ENCODE measurements at regions of chr3 and their contacts with region 1.

Region 1: GRCh38 chr3:128297401-128298138 is 144.3 kb downstream of the EEFSEC start:
- DNase-seq: no peak
- ATAC-seq: no peak
- H3K4me3 ChIP-seq: no peak overlapping the region
- H3K4me3 Mint-ChIP-seq: peak overlapping the region; percentile 46
- H3K27ac ChIP-seq: no peak overlapping the region
- H3K27ac Mint-ChIP-seq: peak overlapping the region; percentile 50
- H3K4me1 ChIP-seq: peaks cover 43% of the 10 kb centered on the region
- H3K4me1 Mint-ChIP-seq: peaks cover 73% of the 10 kb centered on the region
- H3K27me3 ChIP-seq: no peaks in the 10 kb centered on the region
- H3K27me3 Mint-ChIP-seq: no peaks in the 10 kb centered on the region
- CTCF ChIP-seq: no peak

Region 2: GRCh38 chr3:128254967-128255366 is 42.6 kb before region 1 on chr3:
- CTCF ChIA-PET with region 1: no interaction called
- POLR2A ChIA-PET with region 1: no interaction called
- intact Hi-C with region 1: loop called in 1 of 2 experiments (anchors 1 kb)
- DNase-seq: no peak
- ATAC-seq: no peak
- H3K4me3 ChIP-seq: no peak overlapping the region
- H3K4me3 Mint-ChIP-seq: no peak overlapping the region
- H3K27ac ChIP-seq: no peak overlapping the region
- H3K27ac Mint-ChIP-seq: no peak overlapping the region
- H3K4me1 ChIP-seq: no peaks in the 10 kb centered on the region
- H3K4me1 Mint-ChIP-seq: peaks cover 57% of the 10 kb centered on the region
- H3K27me3 ChIP-seq: no peaks in the 10 kb centered on the region
- H3K27me3 Mint-ChIP-seq: no peaks in the 10 kb centered on the region
- CTCF ChIP-seq: no peak

Region 3: GRCh38 chr3:128316481-128316891 is 18.9 kb after region 1 on chr3:
- CTCF ChIA-PET with region 1: no interaction called
- POLR2A ChIA-PET with region 1: interaction called, 21 read pairs
- intact Hi-C with region 1: loop called in 1 of 2 experiments (anchors 1 kb)
- DNase-seq: peak; percentile 54 to 91 (median 72)
- ATAC-seq: peak; percentile 96
- H3K4me3 ChIP-seq: peak overlapping the region; percentile 0
- H3K4me3 Mint-ChIP-seq: peak overlapping the region; percentile 12
- H3K27ac ChIP-seq: peak overlapping the region; percentile 61 to 78
- H3K27ac Mint-ChIP-seq: peak overlapping the region; percentile 78
- H3K4me1 ChIP-seq: peaks cover 90% of the 10 kb centered on the region
- H3K4me1 Mint-ChIP-seq: peaks cover 89% of the 10 kb centered on the region
- H3K27me3 ChIP-seq: no peaks in the 10 kb centered on the region
- H3K27me3 Mint-ChIP-seq: no peaks in the 10 kb centered on the region
- CTCF ChIP-seq: no peak

Region 4: DNA sequence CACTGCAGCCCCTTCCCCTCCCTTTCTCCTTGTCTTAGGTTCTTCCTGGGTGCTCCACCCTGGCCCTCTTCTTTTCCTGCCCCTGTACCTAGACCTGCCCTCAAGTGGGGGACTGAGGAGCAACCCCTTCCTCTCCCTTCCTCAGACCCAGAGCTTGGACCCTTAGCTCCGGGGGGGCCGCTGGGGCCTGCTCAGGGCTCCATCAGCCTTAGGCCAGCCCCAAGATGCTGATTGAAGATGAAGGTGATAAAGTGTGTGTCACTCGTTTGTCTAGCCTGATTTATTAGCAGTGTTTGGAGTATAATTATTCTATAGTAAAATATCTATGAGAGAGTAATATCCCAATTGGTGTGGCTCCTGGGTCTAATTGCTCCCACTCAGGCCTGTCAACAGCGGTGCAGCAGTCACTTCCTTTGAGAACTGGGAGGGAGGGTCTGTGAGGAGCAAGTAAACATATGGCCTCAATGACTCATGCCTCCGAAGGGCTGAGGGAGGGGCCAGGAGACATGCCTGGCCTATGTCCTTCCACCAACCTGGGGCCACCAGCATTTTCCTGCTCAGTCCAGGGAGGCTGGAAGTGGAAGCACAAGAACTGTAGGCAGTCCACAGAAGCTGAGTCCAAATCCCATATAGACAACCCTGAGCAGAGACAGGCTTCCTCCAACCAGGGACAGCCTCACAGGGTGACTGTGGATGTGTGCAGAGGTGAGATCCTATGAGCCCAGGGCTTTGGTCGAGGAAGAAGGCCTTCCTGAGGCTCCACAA is 45.9 kb after region 1 on chr3:
- CTCF ChIA-PET with region 1: no interaction called
- POLR2A ChIA-PET with region 1: no interaction called
- intact Hi-C with region 1: no loop called
- DNase-seq: no peak
- ATAC-seq: no peak
- H3K4me3 ChIP-seq: no peak overlapping the region
- H3K4me3 Mint-ChIP-seq: no peak overlapping the region
- H3K27ac ChIP-seq: no peak overlapping the region
- H3K27ac Mint-ChIP-seq: no peak overlapping the region
- H3K4me1 ChIP-seq: no peaks in the 10 kb centered on the region
- H3K4me1 Mint-ChIP-seq: peaks cover 7% of the 10 kb centered on the region
- H3K27me3 ChIP-seq: no peaks in the 10 kb centered on the region
- H3K27me3 Mint-ChIP-seq: no peaks in the 10 kb centered on the region
- CTCF ChIP-seq: no peak

Measured in CD4-positive, alpha-beta T cell (primary cell).